B cell (primary cell): ENCODE measurements at regions of chr2 and their contacts with region 1.

Region 1: DNA sequence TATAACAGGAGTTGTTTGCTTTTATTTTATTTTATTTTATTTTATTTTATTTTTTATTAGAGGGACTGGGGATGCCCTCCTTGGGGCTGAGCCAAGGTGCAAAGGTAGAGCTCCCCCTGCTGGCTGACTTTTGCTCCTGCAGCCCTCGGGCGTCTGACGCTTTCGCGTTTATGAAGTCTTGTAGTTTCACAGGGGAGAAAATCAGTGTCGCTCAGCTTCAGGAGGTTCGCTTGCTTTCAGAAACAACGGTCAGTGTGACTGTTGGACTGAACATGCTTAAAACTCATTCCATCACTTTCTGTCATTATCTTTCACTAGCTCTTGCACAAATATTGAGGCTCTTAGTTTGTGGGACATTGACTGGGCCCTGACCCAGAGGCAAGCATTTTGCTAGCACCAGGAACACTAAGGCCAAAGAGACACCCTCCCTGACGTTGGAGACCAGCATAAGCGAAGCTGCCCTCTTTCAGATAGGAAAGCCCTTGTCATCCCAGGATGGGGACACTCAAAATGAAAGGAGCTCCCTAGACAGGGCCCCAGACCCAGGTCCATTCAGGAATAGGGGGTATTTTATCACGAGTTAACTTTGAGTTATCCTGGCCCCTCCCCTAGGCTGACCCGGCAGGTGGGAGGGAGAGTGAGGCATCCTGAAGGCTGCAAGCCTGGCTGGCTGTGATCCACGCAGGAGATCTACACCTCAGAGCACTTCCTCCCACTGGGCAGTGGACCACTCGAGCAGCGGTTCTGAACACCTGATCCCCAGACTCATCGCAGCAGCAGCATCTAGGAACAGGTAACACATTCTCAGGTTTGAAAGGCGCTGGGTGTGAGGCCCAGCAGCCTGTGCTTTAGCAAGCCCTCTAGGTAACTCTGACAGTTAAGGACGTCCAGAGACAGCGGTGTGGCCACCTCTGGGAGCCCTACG is 34.4 kb downstream of the LGALSL start:
- DNase-seq: peak; percentile 80
- ATAC-seq: peak; percentile 86
- H3K4me3 ChIP-seq: no peak overlapping the region
- H3K4me3 Mint-ChIP-seq: no peak overlapping the region
- H3K27ac ChIP-seq: no peak overlapping the region
- H3K27ac Mint-ChIP-seq: no peak overlapping the region
- H3K4me1 ChIP-seq: peaks cover 3 to 4% of the 10 kb centered on the region in 2 donors
- H3K4me1 Mint-ChIP-seq: peaks cover 5% of the 10 kb centered on the region
- H3K27me3 ChIP-seq: peaks cover 0 to 3% (median 1%) of the 10 kb centered on the region in 4 experiments
- H3K27me3 Mint-ChIP-seq: peaks cover 22% of the 10 kb centered on the region
- CTCF ChIP-seq: peak; percentile 98

Region 2: DNA sequence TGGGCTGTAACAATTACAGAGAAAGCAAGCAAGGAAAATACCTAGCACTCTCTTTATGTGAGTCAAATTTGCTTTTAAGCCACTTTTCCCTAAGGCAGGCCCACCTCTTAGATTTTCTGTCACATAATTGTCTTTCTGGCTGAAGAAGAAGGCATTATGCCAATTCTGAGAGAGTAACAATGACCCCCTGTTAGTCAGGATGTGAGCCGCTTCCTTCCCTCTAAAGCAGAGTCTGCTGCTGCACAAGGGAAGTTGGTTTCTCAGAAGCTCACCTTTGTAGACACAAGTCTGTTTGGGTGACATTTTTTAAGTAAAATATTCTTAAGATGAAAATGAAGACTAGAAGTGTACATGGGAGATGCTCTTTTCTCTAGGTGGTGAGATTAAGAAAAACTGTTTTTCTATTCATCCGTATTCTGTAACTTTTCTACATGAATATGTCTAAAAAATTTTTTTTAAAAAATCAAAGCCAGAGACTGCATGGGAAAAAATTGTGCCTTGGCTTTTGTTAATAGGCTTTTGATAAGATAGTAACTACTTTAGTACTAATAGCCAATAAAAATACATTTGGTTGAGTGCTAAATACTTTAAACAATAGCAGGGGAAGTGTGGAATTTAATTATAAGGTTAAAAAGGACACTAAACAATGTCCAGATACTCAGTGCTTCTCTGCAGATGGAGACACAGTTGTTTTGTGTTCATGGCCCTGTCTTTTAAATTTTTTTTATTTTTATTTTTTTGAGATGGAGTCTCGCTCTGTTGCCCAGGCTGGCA is 435.7 kb before region 1 on chr2:
- CTCF ChIA-PET with region 1: interaction called, 86 read pairs
- POLR2A ChIA-PET with region 1: no interaction called
- intact Hi-C with region 1: loop called (anchors 1 kb)
- DNase-seq: no peak
- ATAC-seq: no peak
- H3K4me3 ChIP-seq: no peak overlapping the region
- H3K4me3 Mint-ChIP-seq: no peak overlapping the region
- H3K27ac ChIP-seq: no peak overlapping the region
- H3K27ac Mint-ChIP-seq: no peak overlapping the region
- H3K4me1 ChIP-seq: peaks cover 10 to 12% of the 10 kb centered on the region in 2 donors
- H3K4me1 Mint-ChIP-seq: peaks cover 23% of the 10 kb centered on the region
- H3K27me3 ChIP-seq: no peaks in the 10 kb centered on the region
- H3K27me3 Mint-ChIP-seq: no peaks in the 10 kb centered on the region
- CTCF ChIP-seq: no peak

Region 3: DNA sequence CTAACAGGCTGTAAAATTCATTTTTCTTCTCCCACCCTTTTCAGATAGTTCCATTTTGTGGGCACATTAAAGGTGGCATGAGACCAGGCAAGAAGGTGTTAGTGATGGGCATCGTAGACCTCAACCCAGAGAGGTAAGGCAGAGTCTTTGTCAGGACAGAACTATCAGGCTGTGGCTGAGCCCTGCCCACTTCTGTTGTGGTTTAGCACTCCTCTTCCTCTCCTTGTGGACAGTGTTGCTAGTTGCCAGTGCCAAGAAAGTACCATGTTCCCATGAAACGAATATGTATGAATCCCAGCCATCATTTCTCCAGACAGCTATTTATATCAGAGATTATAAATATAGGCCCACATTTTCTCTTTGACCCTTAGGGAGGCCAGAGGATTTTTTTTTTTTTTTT is 32.8 kb before region 1 on chr2:
- CTCF ChIA-PET with region 1: interaction called, 11 read pairs
- POLR2A ChIA-PET with region 1: no interaction called
- intact Hi-C with region 1: no loop called
- DNase-seq: no peak
- ATAC-seq: no peak
- H3K4me3 ChIP-seq: no peak overlapping the region
- H3K4me3 Mint-ChIP-seq: peak overlapping the region; percentile 87
- H3K27ac ChIP-seq: no peak overlapping the region
- H3K27ac Mint-ChIP-seq: no peak overlapping the region
- H3K4me1 ChIP-seq: peaks cover 5 to 12% of the 10 kb centered on the region in 2 donors
- H3K4me1 Mint-ChIP-seq: peaks cover 12% of the 10 kb centered on the region
- H3K27me3 ChIP-seq: no peaks in the 10 kb centered on the region
- H3K27me3 Mint-ChIP-seq: no peaks in the 10 kb centered on the region
- CTCF ChIP-seq: no peak

Region 4: GRCh38 chr2:64467096-64467843 is 21.0 kb before region 1 on chr2:
- CTCF ChIA-PET with region 1: interaction called, 14 read pairs
- POLR2A ChIA-PET with region 1: no interaction called
- intact Hi-C with region 1: no loop called
- DNase-seq: no peak
- ATAC-seq: no peak
- H3K4me3 ChIP-seq: no peak overlapping the region
- H3K4me3 Mint-ChIP-seq: no peak overlapping the region
- H3K27ac ChIP-seq: no peak overlapping the region
- H3K27ac Mint-ChIP-seq: no peak overlapping the region
- H3K4me1 ChIP-seq: no peaks in the 10 kb centered on the region
- H3K4me1 Mint-ChIP-seq: no peaks in the 10 kb centered on the region
- H3K27me3 ChIP-seq: peaks cover 0 to 6% (median 1%) of the 10 kb centered on the region in 4 experiments
- H3K27me3 Mint-ChIP-seq: no peaks in the 10 kb centered on the region
- CTCF ChIP-seq: no peak

Region 5: DNA sequence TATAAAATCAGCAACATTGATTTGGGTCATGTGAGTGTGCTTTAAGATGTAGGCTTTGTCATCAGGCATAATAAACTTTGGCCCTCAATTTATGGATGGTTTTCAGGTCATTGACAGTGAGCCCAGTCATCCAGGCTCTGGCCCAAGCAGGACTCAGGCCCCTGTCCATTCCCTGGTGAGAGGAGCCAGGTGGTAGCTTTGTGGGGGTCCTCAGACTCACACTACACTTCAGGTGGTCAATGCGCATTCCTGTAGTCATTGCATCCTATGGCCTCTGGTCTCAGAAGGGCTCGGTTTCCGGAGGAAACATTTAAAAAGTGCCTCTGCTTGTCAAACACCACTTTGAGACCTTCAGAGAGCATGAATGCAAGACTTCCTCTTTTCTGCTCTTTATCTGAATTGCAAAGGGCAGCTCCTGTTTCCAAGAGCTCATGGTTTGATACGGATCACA is 14.2 kb before region 1 on chr2:
- CTCF ChIA-PET with region 1: interaction called, 14 read pairs
- POLR2A ChIA-PET with region 1: no interaction called
- intact Hi-C with region 1: no loop called
- DNase-seq: peak; percentile 54
- ATAC-seq: peak; percentile 66
- H3K4me3 ChIP-seq: no peak overlapping the region
- H3K4me3 Mint-ChIP-seq: no peak overlapping the region
- H3K27ac ChIP-seq: no peak overlapping the region
- H3K27ac Mint-ChIP-seq: peak overlapping the region; percentile 44
- H3K4me1 ChIP-seq: peaks cover 12 to 13% of the 10 kb centered on the region in 2 donors
- H3K4me1 Mint-ChIP-seq: peaks cover 13% of the 10 kb centered on the region
- H3K27me3 ChIP-seq: no peaks in the 10 kb centered on the region
- H3K27me3 Mint-ChIP-seq: no peaks in the 10 kb centered on the region
- CTCF ChIP-seq: no peak

Region 6: DNA sequence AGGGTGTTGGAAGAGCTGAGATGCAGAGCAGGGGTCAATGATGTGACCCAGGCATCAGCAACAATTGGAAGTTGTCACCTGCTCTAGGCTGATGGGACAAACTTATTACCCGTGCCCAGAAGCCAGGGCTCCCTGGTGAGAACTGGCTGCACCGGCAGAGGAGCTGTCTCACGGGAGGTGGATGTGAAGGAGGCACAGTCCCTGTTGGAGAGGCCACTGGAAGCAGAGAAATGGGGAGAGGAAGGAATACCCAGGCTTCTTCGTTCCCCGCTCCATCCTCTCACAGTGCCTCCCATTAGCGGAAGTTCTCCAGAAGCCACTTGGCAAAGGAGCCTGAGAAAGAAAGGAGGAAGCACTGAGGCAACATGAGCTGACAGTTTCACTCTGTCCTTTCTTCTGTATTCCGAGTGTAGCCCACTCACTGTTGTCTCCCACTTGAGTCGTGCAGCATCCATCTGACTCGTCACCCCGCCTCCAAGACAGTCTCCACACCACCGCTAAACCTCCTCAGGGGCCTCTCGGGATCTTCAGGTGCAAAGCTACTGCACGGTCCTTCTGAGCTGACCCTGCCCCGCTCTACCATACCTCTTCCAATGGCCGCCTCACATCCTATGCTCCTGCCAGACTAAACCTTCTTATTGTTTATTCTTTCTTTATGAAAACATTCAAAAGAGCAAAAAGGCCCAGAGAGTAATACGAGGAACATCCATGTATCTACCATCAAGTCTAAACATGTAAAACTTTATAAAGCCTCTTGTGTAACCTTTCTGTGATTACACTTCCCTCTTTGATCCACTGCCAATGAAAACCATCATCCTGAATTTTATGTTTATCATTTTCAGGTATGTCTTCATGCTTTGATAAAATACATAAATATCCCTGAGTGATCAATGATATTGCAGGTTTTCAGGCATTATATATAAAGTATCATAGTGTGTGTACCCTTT is 16.7 kb after region 1 on chr2:
- CTCF ChIA-PET with region 1: interaction called, 11 read pairs
- POLR2A ChIA-PET with region 1: no interaction called
- intact Hi-C with region 1: no loop called
- DNase-seq: no peak
- ATAC-seq: no peak
- H3K4me3 ChIP-seq: no peak overlapping the region
- H3K4me3 Mint-ChIP-seq: no peak overlapping the region
- H3K27ac ChIP-seq: no peak overlapping the region
- H3K27ac Mint-ChIP-seq: no peak overlapping the region
- H3K4me1 ChIP-seq: no peaks in the 10 kb centered on the region
- H3K4me1 Mint-ChIP-seq: no peaks in the 10 kb centered on the region
- H3K27me3 ChIP-seq: peaks cover 0 to 9% (median 2%) of the 10 kb centered on the region in 4 experiments
- H3K27me3 Mint-ChIP-seq: peaks cover 28% of the 10 kb centered on the region
- CTCF ChIP-seq: no peak

Region 7: GRCh38 chr2:64562148-64562784 is 74.0 kb after region 1 on chr2:
- CTCF ChIA-PET with region 1: interaction called, 9 read pairs
- POLR2A ChIA-PET with region 1: no interaction called
- intact Hi-C with region 1: loop called (anchors 2 kb)
- DNase-seq: peak; percentile 67
- ATAC-seq: peak; percentile 51
- H3K4me3 ChIP-seq: no peak overlapping the region
- H3K4me3 Mint-ChIP-seq: no peak overlapping the region
- H3K27ac ChIP-seq: no peak overlapping the region
- H3K27ac Mint-ChIP-seq: peak overlapping the region; percentile 38
- H3K4me1 ChIP-seq: peaks cover 5 to 7% of the 10 kb centered on the region in 2 donors
- H3K4me1 Mint-ChIP-seq: peaks cover 39% of the 10 kb centered on the region
- H3K27me3 ChIP-seq: no peaks in the 10 kb centered on the region
- H3K27me3 Mint-ChIP-seq: no peaks in the 10 kb centered on the region
- CTCF ChIP-seq: peak; percentile 76